HEK293T (cell line): ENCODE measurements at regions of chr1 and their contacts with region 1.

Region 1: DNA sequence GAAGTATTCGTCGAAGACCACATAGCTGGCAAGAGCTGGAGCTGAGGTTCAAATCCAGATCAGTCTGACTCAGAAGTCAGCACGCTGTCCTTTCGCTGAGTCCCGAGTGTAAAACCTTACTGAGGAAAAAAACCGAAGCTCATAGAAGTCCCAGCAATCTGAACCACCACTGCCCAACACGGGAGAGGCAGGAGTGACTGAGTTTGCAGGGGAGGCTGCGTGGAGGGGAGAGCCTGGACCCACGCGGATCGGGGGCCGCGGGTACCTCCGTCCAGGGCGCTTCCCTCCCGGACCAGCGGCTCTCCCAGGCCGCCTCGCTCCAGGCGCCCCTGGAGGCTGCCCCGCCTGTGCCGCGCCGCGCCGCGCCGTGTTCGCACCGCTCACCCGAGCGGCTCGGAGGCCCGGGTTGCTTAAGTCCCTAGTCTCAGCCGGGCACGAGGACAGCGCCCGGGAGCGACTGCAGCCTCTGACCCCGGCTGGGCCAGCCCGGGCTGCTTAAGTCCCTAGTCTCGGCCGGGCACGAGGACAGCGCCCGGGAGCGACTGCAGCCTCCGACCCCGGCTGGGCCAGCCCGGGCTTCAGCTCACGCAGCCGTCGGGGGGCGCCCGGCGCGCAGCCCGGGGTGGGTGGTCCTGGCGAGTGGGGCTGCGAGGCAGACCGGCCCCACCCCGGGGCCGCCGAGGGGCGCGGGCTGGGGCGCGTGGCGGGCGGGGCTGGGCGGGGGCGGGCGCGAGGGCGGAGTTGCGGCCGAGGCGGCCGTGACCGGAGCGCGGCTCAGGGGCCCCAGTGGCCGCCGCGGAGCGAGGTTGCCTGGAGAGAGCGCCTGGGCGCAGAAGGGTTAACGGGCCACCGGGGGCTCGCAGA is at the start of gene ADAMTSL4:
- DNase-seq: peak; percentile 78

Region 2: GRCh38 chr1:150529017-150529416 is 19.8 kb before region 1 on chr1:
- CTCF ChIA-PET with region 1: interaction called, 11 read pairs
- POLR2A ChIA-PET with region 1: interaction called, 5 read pairs
- DNase-seq: no peak

Region 3: GRCh38 chr1:150561974-150562445 is 13.1 kb after region 1 on chr1:
- CTCF ChIA-PET with region 1: interaction called, 19 read pairs
- POLR2A ChIA-PET with region 1: interaction called, 4 read pairs
- DNase-seq: peak; percentile 89

Region 4: DNA sequence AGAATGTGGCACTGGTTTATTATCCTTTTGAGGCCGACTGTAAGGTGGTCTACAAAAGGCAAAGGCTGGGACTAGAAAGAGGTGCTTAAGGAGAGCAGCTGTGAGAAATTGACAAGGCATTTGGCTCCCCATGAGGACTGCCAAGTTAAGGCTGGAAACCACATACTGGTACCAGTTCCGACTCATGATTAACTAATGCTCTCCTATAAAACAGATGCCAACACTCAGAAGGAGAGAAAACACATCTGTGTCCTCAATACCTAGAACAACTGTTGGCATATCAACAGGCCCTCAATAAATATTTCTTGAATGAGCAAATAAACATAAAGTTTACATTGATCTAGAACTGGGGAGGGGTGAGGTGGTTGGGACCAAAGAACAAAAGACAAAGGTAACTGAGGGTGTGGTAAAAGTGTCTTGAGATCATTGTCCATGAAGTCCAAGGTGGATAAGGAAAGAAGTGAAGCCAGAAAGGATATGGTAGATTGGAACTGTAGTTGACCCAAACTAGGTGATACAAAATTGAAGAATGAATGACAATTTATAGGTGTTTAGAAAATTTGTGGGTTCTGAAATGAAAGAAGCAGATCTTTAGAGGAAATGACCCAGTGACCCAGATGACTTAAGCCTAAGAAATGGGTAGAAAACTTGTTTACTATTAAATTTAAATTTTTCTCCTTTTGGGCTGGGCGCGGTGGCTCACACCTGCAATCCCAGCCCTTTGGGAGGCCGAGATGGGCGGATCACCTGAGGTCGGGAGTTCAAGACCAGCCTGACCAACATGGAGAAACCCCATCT is 47.4 kb after region 1 on chr1:
- CTCF ChIA-PET with region 1: no interaction called
- POLR2A ChIA-PET with region 1: no interaction called
- DNase-seq: no peak